GM12878 (cell line): ENCODE measurements at regions of chr4 and their contacts with region 1.

Region 1: GRCh38 chr4:57499786-57500185 is 389.6 kb upstream of the IGFBP7 start:
- DNase-seq: no peak
- ATAC-seq: no peak
- H3K4me3 ChIP-seq: no peak overlapping the region
- H3K27ac ChIP-seq: no peak overlapping the region
- H3K4me1 ChIP-seq: no peaks in the 10 kb centered on the region
- H3K27me3 ChIP-seq: no peaks in the 10 kb centered on the region
- CTCF ChIP-seq: no peak
- EP300 ChIP-seq: no peak
- POLR2A ChIP-seq: no peak
- RAD21 ChIP-seq: no peak

Region 2: DNA sequence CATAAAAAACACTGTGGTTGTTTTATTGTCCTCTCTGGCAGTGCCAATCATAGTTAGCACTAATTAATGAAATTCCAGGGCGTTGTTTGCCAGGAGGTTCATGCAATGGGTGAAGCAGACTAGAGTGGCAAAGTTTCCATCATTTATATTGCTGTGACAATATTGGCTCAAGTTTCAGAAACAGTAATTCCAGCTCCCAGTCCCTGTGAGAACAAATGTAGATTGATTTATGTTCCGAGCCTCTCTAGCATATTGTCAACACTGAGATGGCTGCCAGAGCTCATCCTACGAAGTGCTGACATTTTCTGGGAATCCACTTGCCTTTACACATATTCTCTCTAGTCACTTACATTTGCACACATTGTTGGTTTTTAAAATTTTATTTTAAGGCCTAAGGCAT is 50.4 kb after region 1 on chr4:
- CTCF ChIA-PET with region 1: no interaction called
- POLR2A ChIA-PET with region 1: no interaction called
- RAD21 ChIA-PET with region 1: no interaction called
- SMC1A ChIA-PET with region 1: no interaction called
- in situ Hi-C with region 1: loop called (anchors 10 kb)
- intact Hi-C with region 1: no loop called
- DNase-seq: no peak
- ATAC-seq: no peak
- H3K4me3 ChIP-seq: no peak overlapping the region
- H3K27ac ChIP-seq: no peak overlapping the region
- H3K4me1 ChIP-seq: no peaks in the 10 kb centered on the region
- H3K27me3 ChIP-seq: no peaks in the 10 kb centered on the region
- CTCF ChIP-seq: no peak
- EP300 ChIP-seq: no peak
- POLR2A ChIP-seq: no peak
- RAD21 ChIP-seq: no peak